BJ (cell line): ENCODE measurements at regions of chr15 and their contacts with region 1.

Region 1: DNA sequence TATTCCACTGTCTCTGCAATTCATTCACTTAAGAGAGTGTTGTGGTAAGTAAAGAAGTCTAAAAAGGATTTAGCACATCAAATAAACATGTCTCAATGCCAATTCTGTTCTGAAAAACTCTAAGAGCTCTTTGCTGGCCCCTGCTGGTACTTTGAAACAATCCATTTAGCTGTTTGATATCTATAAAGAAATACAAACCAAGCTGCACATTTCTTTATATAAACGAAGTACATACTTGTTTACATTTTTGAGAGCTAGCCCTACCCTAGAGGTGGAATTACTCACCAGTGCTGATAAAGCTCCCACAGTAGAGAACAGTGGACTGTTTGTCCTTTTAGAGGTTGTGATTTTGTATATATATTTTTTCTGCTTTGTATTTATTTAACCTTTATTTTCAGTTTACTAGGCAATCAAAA is 75.5 kb downstream of the NEDD4 start:
- DNase-seq: peak; percentile 70
- H3K4me3 ChIP-seq: no peak overlapping the region
- H3K27me3 ChIP-seq: no peaks in the 10 kb centered on the region
- CTCF ChIP-seq: peak; percentile 77

Region 2: DNA sequence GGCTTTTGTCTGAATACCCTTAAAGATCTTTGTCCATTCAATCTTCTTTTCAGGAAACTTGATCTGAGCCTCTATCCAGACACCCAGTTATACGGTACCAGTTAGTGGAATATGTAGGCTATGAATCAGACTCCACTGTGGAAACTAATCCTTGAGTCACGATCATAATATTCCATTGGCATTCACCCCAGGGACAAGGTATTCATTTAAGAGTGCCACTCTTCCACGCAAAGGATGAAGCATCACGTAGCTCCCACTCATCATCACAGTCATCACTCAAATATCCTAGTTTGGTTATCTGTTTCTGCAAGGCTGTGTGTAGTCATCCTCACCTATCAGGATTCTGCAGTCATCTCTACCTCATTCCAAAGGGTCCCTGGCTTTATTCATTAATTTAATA is 10.1 kb before region 1 on chr15:
- CTCF ChIA-PET with region 1: interaction called, 12 read pairs
- POLR2A ChIA-PET with region 1: no interaction called
- DNase-seq: peak; percentile 93
- H3K4me3 ChIP-seq: 0 out of 2 replicates have a peak overlapping the region, but pooled peaks have one; percentile 9
- H3K27me3 ChIP-seq: no peaks in the 10 kb centered on the region
- CTCF ChIP-seq: no peak

Region 3: GRCh38 chr15:55937040-55937439 is 19.2 kb after region 1 on chr15:
- CTCF ChIA-PET with region 1: interaction called, 4 read pairs
- POLR2A ChIA-PET with region 1: interaction called, 30 read pairs
- DNase-seq: no peak
- H3K4me3 ChIP-seq: no peak overlapping the region
- H3K27me3 ChIP-seq: no peaks in the 10 kb centered on the region
- CTCF ChIP-seq: no peak

Region 4: DNA sequence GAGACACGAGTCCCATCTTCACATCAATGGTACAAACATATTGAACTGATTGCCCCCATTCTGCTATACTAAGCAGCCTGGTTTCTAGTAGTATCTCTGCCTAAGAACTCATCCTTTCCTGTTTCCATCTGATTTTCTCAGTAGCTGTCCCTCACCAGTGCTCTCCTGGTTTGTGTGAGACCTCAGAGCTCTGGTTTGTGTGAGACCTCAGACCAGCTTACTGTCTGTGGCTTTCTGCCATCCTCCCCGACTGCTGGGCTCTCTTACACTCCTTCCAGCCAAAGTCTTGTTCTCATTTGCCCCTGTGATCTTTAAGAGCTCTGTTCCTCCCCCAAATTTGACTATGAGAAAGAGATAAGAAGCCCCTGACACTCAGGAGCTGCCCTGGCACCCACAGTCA is 116.6 kb after region 1 on chr15:
- CTCF ChIA-PET with region 1: no interaction called
- POLR2A ChIA-PET with region 1: no interaction called
- DNase-seq: no peak
- H3K4me3 ChIP-seq: no peak overlapping the region
- H3K27me3 ChIP-seq: no peaks in the 10 kb centered on the region
- CTCF ChIP-seq: no peak

Region 5: DNA sequence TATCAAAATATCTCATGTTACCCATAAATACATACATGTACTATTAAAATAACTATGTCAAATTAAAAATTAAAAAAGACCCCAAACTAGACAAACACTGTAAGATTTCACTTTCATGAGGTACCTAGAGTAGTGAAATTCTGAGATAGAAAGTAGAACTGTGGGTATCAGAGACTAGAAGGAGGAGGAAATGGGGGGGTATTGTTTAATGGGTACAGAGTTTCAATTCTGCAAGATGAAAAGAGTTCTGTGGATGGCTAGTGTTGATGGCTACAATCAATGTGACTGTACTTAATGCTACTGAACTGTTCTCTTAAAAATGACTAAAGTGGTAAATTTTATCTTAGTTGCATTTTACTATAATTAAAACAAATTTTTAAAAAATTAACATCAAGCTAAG is 289.2 kb after region 1 on chr15:
- CTCF ChIA-PET with region 1: no interaction called
- POLR2A ChIA-PET with region 1: no interaction called
- DNase-seq: no peak
- H3K4me3 ChIP-seq: no peak overlapping the region
- H3K27me3 ChIP-seq: no peaks in the 10 kb centered on the region
- CTCF ChIP-seq: no peak